ENCODE measurements at regions of chr3 and their contacts with region 1.

Region 1: DNA sequence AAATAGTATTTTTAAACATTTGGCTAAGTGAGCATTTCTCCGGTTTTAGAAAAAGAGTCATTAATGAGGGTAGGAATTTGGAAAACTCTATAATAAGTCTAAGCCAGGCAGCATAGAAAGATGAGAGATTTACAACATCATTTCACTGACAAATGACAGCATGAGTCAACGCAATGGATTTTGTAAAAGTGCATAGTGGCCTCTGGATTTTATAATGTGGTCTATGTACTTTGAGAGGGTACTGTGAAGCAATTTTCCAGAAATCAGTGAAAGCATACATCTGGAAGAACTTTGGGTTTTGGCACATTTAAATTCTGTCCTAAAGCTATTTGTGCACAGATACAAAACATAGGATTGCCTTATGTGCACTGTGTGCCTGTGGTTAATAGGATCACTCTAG is 130.8 kb upstream of the CCNL1 start:
- DNase-seq: no peak
- ATAC-seq: no peak
- H3K4me3 ChIP-seq: no peak overlapping the region
- H3K27ac ChIP-seq: no peak overlapping the region; a peak in 1 of 6 replicates
- H3K4me1 ChIP-seq: peaks cover 17% of the 10 kb centered on the region; the same call in 2 of the 3 replicates
- CTCF ChIP-seq: no peak
- EP300 ChIP-seq: no peak
- POLR2A ChIP-seq: no peak
- RAD21 ChIP-seq: no peak

Region 2: GRCh38 chr3:157248590-157249422 is 42.0 kb before region 1 on chr3:
- CTCF ChIA-PET with region 1: no interaction called
- POLR2A ChIA-PET with region 1: no interaction called
- DNase-seq: peak; percentile 10 to 27
- ATAC-seq: peak; percentile 66
- H3K4me3 ChIP-seq: no peak overlapping the region
- H3K27ac ChIP-seq: peak overlapping the region in 1 of 2 experiments; percentile 46; a peak in 1 of 6 replicates
- H3K4me1 ChIP-seq: peaks cover 9% of the 10 kb centered on the region; the same call in 2 of the 3 replicates
- CTCF ChIP-seq: no peak
- EP300 ChIP-seq: no peak
- POLR2A ChIP-seq: no peak
- RAD21 ChIP-seq: no peak

Region 3: GRCh38 chr3:157280354-157280753 is 10.4 kb before region 1 on chr3:
- CTCF ChIA-PET with region 1: no interaction called
- POLR2A ChIA-PET with region 1: interaction called, 11 read pairs
- DNase-seq: no peak
- ATAC-seq: no peak
- H3K4me3 ChIP-seq: no peak overlapping the region
- H3K27ac ChIP-seq: no peak overlapping the region
- H3K4me1 ChIP-seq: no peaks in the 10 kb centered on the region; the same call in 2 of the 3 replicates
- CTCF ChIP-seq: no peak
- EP300 ChIP-seq: no peak
- POLR2A ChIP-seq: no peak
- RAD21 ChIP-seq: no peak